Activated CD4-positive, alpha-beta memory T cell treated with anti-CD3 and anti-CD28 coated beads, Interleukin-2, amount 10 ng/mL, durations not matched to agents 7 days and 5 days (primary cell): ENCODE measurements at regions of chr5 and their contacts with region 1.

Region 1: DNA sequence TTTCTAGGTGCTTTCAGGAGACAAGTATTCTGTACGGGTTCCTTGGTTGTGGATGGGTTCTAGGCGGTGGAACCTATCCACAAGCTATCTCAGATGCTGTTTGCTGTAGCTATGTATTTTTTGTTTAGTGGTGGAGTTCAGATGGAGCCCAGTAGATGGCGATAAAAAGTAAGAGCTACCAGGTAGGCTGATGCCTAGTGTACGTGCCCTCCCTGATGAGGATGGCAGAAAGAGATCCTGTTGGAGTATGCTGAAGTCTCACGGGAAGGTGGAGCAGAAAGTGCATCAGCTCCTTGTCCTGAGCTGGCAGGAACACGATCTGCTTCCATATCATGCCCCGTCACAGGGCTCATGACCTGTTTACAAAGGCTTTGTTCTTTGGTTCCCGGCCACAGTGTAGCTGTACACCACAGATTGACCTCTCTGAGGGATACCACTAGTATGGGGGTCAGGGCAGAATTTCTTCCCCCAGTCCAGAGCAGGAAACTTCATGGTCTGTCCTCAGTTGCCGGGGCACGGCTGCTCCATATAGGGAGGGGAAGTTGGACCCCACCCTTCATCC is 12.6 kb upstream of the UGT3A2 start:
- DNase-seq: peak; percentile 31
- H3K4me3 Mint-ChIP-seq: no peak overlapping the region
- H3K27ac Mint-ChIP-seq: no peak overlapping the region
- H3K4me1 Mint-ChIP-seq: no peaks in the 10 kb centered on the region
- H3K27me3 Mint-ChIP-seq: peaks cover 50% of the 10 kb centered on the region

Region 2: DNA sequence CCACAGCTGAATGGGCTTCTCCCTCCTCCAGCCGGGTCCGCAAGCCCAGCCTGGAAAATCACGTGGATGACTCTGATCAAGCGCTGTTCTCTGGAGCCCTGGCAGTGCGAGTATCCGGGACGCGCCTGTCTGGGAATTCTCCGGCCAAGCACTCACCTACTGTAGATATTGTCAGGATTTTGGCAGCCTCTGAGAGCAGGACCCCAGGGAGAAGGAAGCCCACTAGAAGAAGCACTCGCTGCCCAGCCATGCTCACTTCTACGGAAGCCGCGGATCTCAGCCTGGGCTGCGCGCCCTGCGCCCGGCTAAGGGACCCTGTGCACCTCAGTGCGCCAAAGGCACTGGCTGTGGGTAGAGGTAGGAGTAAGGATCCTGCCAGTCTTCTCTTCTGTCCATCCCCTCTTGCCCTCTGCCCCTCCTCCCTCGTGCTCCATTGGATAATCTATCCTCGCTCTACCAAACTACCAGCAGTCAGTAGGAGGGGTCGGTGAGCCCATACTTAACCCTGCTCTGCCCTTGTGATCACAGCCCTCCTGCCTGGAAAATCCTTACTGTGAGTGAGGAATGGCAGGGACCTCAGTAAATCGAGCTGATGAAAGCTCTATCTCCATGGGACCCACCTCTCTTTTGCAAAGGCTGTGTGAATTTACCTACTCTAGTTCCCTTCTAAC is 12.6 kb before region 1 on chr5 and contains the start of gene UGT3A2:
- CTCF ChIA-PET with region 1: interaction called, 16 read pairs
- POLR2A ChIA-PET with region 1: no interaction called
- DNase-seq: no peak
- H3K4me3 Mint-ChIP-seq: no peak within 1 kb of the TSS
- H3K27ac Mint-ChIP-seq: no peak within 1 kb of the TSS
- H3K4me1 Mint-ChIP-seq: peaks cover 11% of the 10 kb centered on the region
- H3K27me3 Mint-ChIP-seq: peaks cover 38% of the 10 kb centered on the region
- total RNA-seq, gene UGT3A2: 0.15 to 0.18 TPM

Region 3: GRCh38 chr5:36089989-36090564 is 10.8 kb after region 1 on chr5:
- CTCF ChIA-PET with region 1: interaction called, 67 read pairs
- POLR2A ChIA-PET with region 1: no interaction called
- DNase-seq: no peak
- H3K4me3 Mint-ChIP-seq: no peak overlapping the region
- H3K27ac Mint-ChIP-seq: no peak overlapping the region
- H3K4me1 Mint-ChIP-seq: no peaks in the 10 kb centered on the region
- H3K27me3 Mint-ChIP-seq: peaks cover 24% of the 10 kb centered on the region

Region 4: DNA sequence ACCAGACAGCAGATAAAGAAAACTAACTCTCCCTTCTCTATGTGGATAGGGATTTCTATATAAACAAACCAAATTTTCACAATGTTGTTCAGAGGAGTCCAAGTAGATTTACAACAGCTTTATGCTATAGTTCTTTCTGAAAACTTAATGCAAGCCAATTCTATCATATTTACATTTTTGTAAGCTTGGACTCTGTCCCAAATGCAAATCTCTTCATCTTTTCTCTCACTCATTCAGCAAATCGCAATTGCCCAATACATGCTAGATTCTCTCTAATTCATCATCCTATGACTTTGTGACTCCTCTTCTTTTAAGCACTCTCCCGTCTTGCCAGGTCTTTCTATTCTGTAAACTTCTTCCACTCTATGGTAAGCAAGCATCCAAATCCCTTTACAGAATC is 26.5 kb after region 1 on chr5:
- CTCF ChIA-PET with region 1: interaction called, 10 read pairs
- POLR2A ChIA-PET with region 1: no interaction called
- DNase-seq: no peak
- H3K4me3 Mint-ChIP-seq: no peak overlapping the region
- H3K27ac Mint-ChIP-seq: no peak overlapping the region
- H3K4me1 Mint-ChIP-seq: no peaks in the 10 kb centered on the region
- H3K27me3 Mint-ChIP-seq: no peaks in the 10 kb centered on the region

Region 5: DNA sequence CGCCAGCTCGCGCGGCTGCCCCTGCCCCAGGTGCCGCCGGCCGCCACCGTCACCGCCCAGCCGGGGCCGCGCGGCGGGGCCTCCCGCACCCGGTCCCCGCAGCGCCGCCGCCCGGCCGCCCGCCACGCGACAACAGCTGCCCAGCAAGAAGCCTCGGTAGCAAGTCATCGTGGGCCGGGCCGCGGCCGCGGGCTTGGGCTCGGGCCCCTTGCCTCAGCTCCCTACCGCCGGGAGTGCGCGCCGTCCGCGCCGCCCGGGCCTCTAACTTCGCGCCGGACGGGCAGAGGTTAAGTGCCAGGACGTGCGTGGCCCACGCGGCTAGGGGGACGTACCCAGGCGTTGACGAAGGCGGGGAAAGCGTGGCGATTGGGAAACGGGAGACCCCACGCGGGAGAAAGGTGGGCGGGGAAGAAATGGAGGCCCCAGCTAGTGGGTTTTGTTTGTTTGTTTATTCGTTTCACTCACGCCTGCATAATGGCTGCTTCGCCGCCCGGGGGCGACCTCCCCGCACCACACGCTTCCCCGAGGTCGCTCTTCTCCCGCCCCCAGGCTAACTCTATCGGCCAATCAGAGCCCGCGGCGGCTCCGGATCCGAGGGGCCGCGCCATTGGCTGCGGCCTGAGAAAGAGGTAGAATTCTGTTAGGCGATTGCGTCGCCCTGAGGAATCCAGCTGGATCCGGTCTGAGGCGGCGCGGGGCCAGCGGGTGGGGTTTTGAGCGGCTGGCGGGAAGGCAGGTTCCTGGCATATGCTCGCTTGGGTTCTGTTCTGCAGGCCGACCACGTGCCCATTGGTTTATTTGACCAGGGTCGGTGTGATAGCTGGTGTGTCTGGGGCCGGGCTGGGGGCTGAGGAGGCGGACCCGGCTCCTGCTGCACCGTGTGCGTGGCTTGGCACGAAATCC is 162.6 kb after region 1 on chr5 and contains the start of gene NADK2:
- CTCF ChIA-PET with region 1: interaction called, 14 read pairs
- POLR2A ChIA-PET with region 1: interaction called, 3 read pairs
- DNase-seq: peak; percentile 95
- H3K4me3 Mint-ChIP-seq: peak within 1 kb of the TSS; percentile 87
- H3K27ac Mint-ChIP-seq: peak within 1 kb of the TSS; percentile 81
- H3K4me1 Mint-ChIP-seq: peaks cover 37% of the 10 kb centered on the region
- H3K27me3 Mint-ChIP-seq: no peaks in the 10 kb centered on the region
- total RNA-seq, gene NADK2: 15.8 to 16.2 TPM

Region 6: GRCh38 chr5:36535859-36536615 is 456.8 kb after region 1 on chr5:
- CTCF ChIA-PET with region 1: no interaction called
- POLR2A ChIA-PET with region 1: no interaction called
- DNase-seq: no peak
- H3K4me3 Mint-ChIP-seq: no peak overlapping the region
- H3K27ac Mint-ChIP-seq: no peak overlapping the region
- H3K4me1 Mint-ChIP-seq: no peaks in the 10 kb centered on the region
- H3K27me3 Mint-ChIP-seq: peaks cover 10% of the 10 kb centered on the region